Spleen (tissue), 13 donors: ENCODE measurements at regions of chr6 and their contacts with region 1.

Region 1: GRCh38 chr6:34757687-34758274 is 476 bp downstream of the SNRPC start:
- DNase-seq: no peak
- H3K4me3 ChIP-seq: peak overlapping the region; percentile 56 to 91 (median 74)
- H3K27ac ChIP-seq: peak overlapping the region; percentile 84 to 95 (median 94)
- H3K4me1 ChIP-seq: peaks cover 9 to 67% (median 23%) of the 10 kb centered on the region in 6 donors
- H3K27me3 ChIP-seq: no peaks in the 10 kb centered on the region
- CTCF ChIP-seq: no peak
- POLR2A ChIP-seq: no peak

Region 2: DNA sequence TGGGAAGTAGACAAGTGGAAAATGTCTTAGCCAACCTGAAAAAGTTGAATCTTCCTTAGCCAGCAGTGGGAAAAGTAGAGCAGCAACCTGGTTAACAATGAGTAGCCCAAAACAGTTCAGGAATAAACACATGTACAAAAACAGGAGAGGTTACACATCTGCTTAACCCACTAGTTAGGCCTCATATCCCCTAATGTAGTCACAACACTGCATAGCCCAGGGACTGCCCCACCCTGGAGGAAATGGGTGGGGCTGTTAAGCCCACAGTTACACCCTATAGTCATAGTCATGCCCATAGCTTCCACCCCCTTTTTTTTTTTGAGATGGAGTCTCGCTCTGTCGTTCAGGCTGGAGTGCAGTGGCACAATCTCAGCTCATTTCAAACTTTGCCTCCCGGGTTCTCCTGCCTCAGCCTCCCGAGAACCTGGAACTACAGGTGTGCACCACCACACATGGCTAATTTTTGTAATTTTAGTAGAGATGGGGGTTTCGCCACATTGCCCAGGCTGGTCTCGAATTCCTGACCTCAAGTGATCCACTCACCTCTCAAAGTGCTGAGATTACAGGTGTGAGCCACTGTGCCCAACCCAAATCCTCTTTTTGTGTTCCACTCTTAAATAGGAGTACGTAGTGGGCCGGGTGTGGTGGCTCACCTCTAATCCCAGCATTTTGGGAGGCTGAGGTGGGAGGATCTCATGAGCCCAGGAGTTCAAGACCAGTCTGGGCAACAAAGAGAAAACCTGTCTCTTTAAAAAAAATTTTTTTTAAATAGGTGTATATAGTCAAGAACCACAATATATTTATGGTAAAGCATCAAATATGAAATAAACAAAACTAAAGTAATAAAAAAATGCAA is 85.8 kb before region 1 on chr6:
- intact Hi-C with region 1: no loop called
- DNase-seq: peak; percentile 89
- H3K4me3 ChIP-seq: peak overlapping the region in 1 of 8 donors; percentile 42
- H3K27ac ChIP-seq: peak overlapping the region; percentile 64 to 91 (median 80)
- H3K4me1 ChIP-seq: peaks cover 38 to 86% (median 55%) of the 10 kb centered on the region in 6 donors
- H3K27me3 ChIP-seq: no peaks in the 10 kb centered on the region
- CTCF ChIP-seq: no peak
- POLR2A ChIP-seq: no peak

Region 3: GRCh38 chr6:34709386-34709785 is 48.4 kb before region 1 on chr6:
- intact Hi-C with region 1: loop called (anchors 10 kb)
- DNase-seq: peak; percentile 80
- H3K4me3 ChIP-seq: no peak overlapping the region
- H3K27ac ChIP-seq: peak overlapping the region in 7 of 8 donors; percentile 34 to 79 (median 50)
- H3K4me1 ChIP-seq: peaks cover 0 to 20% (median 10%) of the 10 kb centered on the region in 6 donors
- H3K27me3 ChIP-seq: no peaks in the 10 kb centered on the region
- CTCF ChIP-seq: no peak
- POLR2A ChIP-seq: no peak

Region 4: DNA sequence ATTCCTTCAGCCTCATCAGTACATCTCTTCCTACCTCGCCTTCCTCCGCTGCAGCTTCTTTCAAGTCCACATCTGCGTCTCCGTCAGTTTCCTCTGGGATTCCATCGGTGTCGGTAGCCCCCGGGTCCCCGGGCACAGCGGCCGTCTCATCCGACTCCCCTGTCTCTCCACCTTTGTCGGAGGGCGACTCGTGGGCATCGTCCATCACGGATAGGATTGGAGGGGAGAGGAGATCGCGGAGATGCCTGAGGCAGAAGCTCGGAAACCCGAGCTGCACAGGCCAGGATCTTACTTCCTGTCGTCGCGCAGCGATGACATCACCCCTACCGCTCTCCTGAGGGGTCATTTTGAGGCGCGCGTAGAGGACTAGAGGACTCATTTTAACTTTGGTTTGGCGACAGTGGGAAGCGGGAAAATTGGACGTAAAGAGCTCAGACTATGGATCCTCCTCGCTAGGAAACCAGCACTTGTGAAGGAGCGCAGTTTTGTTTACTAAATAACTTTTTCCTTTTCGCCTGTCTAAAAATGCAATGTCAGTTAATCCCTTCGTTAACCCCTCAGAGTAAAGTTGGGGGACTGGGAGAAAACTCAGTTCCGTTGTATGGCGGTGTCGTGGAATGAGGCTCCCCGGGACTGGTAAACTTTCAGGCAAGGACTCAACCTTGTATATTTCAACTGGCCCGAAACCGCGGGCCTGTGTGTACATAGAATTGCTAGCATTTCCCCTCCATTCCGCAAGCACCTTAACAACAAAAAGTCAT is 130.2 kb after region 1 on chr6 and contains the start of gene TAF11:
- intact Hi-C with region 1: loop called (anchors 10 kb)
- DNase-seq: peak; percentile 97
- H3K4me3 ChIP-seq: peak within 1 kb of the TSS; percentile 75 to 96 (median 84)
- H3K27ac ChIP-seq: peak within 1 kb of the TSS; percentile 66 to 94 (median 92)
- H3K4me1 ChIP-seq: peaks cover 18 to 72% (median 59%) of the 10 kb centered on the region in 6 donors
- H3K27me3 ChIP-seq: no peaks in the 10 kb centered on the region
- CTCF ChIP-seq: peak in 1 of 11 experiments; percentile 14
- POLR2A ChIP-seq: peak; percentile 39 to 85 (median 78)
- total RNA-seq, gene TAF11: 19.1 to 27.7 (median 24.9) TPM